ENCODE measurements at regions of chr9 and their contacts with region 1.

Region 1: DNA sequence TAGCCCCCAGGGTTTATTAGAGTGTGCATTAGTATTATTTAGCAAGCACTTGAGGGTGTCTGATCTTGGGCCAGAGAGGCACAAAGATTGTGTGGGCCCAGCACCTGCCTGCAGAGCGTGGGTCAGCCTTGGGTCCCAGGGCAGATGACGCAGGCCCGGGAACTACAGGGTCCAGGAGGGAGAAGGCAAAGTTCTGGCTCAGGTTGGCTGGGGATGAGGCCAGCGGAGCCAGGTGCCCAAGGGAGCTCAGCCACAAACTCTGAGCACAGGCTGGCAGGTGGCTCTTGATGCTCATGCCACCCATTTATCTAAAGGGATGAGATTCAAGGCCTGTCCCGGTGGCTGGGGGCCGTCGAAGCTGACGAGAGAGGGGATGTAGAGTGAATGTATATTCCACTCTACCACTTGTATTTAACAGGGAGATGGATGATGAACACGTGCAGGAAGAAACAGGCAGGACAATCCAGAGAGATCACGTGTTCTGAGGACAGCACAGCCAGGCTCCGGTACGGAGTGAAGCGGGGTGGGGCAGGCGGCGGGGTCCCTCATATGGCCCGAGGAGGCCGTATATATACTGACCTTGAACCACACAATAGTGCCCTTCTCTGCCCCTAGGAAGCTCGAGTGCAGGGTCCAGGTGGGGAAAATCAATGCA is 818 bp upstream of the OBP2A start:
- DNase-seq: no peak
- ATAC-seq: no peak
- H3K4me3 ChIP-seq: no peak overlapping the region
- H3K4me3 Mint-ChIP-seq: no peak overlapping the region
- H3K27ac ChIP-seq: no peak overlapping the region
- H3K27ac Mint-ChIP-seq: no peak overlapping the region
- H3K4me1 ChIP-seq: no peaks in the 10 kb centered on the region
- H3K4me1 Mint-ChIP-seq: no peaks in the 10 kb centered on the region
- H3K27me3 ChIP-seq: no peaks in the 10 kb centered on the region
- H3K27me3 Mint-ChIP-seq: no peaks in the 10 kb centered on the region
- CTCF ChIP-seq: no peak

Region 2: GRCh38 chr9:134968011-134968822 is 576.9 kb before region 1 on chr9:
- CTCF ChIA-PET with region 1: no interaction called
- POLR2A ChIA-PET with region 1: no interaction called
- intact Hi-C with region 1: loop called in 1 of 2 experiments (anchors 10 kb)
- DNase-seq: no peak
- ATAC-seq: no peak
- H3K4me3 ChIP-seq: no peak overlapping the region
- H3K4me3 Mint-ChIP-seq: no peak overlapping the region
- H3K27ac ChIP-seq: no peak overlapping the region
- H3K27ac Mint-ChIP-seq: no peak overlapping the region
- H3K4me1 ChIP-seq: no peaks in the 10 kb centered on the region
- H3K4me1 Mint-ChIP-seq: no peaks in the 10 kb centered on the region
- H3K27me3 ChIP-seq: no peaks in the 10 kb centered on the region
- H3K27me3 Mint-ChIP-seq: peaks cover 11% of the 10 kb centered on the region
- CTCF ChIP-seq: no peak